ENCODE measurements at regions of chr2 and their contacts with region 1.

Region 1: GRCh38 chr2:181231886-181232621 is 225.1 kb upstream of the ITGA4 start:
- DNase-seq: no peak
- H3K4me3 Mint-ChIP-seq: no peak overlapping the region
- H3K27ac Mint-ChIP-seq: no peak overlapping the region
- H3K4me1 Mint-ChIP-seq: peaks cover 44% of the 10 kb centered on the region
- H3K27me3 Mint-ChIP-seq: no peaks in the 10 kb centered on the region

Region 2: DNA sequence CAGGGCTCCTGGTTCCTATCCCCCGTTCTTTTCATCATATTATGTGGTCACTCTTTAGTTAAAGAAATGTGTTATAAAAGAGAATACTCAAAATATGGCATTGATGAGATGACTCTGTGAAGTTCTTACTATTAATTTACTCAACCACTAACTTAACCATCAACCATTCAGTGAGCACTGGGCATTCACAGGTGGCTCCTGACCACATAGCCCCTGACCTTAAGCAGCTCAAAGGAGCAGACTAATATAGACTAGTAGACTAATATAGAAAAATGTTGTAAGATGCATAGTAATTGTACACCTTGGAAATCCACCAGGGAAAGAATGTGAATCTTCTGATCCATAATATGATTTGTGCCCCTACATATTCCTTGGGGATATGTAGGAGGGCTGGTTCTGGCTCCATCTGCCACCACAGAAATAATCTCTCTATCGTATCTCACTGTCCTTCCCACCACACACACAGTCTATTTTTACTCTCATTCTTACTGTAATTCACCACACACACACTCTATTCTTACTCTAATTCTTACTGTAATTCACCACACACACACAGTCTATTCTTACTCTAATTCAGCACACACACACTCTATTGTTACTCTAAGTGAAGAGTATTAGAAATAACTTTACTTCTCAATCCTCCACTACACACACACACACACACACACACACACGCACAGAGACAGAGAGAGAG is 36.3 kb after region 1 on chr2:
- intact Hi-C with region 1: loop called (anchors 5 kb)
- DNase-seq: no peak
- H3K4me3 Mint-ChIP-seq: no peak overlapping the region
- H3K27ac Mint-ChIP-seq: no peak overlapping the region
- H3K4me1 Mint-ChIP-seq: peaks cover 39% of the 10 kb centered on the region
- H3K27me3 Mint-ChIP-seq: no peaks in the 10 kb centered on the region

Measured in activated T-helper 2 cell treated with anti-CD3 and anti-CD28 coated beads, Interferon-gamma antibody, Interleukin-2, Interleukin-4, amounts not matched to agents 10 μg/mL and 5 μg/mL and 100 μg/mL, durations not matched to agents 14 hours and 24 hours and 36 hours (primary cell).